ENCODE measurements at regions of chrX and their contacts with region 1.

Region 1: GRCh38 chrX:65528705-65529340 is 5.8 kb downstream of the LAS1L start:
- DNase-seq: no peak
- H3K4me3 ChIP-seq: no peak overlapping the region
- H3K27ac ChIP-seq: no peak overlapping the region
- H3K4me1 ChIP-seq: peaks cover 0 to 11% (median 10%) of the 10 kb centered on the region in 4 donors
- H3K27me3 ChIP-seq: no peaks in the 10 kb centered on the region
- CTCF ChIP-seq: peak; percentile 41 to 84 (median 66)
- EP300 ChIP-seq: no peak
- POLR2A ChIP-seq: no peak

Region 2: DNA sequence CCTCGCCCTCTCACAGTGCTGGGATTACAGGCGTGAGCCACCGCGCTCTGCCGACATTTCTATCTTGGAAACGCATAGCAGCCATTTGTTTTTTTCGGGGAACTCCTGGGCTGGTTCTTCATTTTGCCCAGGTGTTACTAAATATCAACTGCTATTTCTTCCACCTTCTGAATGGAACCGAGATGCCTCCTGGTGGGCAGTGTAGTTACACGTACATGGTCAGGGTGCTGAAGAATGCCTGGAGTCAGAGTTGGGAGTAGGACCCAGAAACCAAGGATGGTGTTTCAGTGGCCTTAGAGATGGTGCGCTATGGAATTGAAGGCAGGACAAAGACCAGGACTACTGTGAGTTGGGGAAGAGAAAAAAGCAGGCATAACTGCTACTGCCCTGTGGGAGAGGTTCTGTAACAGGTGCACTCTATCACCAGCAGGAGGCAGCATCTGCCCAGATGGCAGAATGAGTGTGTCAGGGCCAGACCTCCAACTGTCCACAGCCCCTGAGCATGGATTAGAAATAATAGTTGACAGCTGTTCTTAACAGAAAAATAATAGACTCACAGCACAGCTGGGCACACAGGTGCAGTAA is 634.3 kb before region 1 on chrX:
- intact Hi-C with region 1: loop called (anchors 5 kb)
- DNase-seq: no peak
- H3K4me3 ChIP-seq: no peak overlapping the region
- H3K27ac ChIP-seq: no peak overlapping the region
- H3K4me1 ChIP-seq: no peaks in the 10 kb centered on the region
- H3K27me3 ChIP-seq: no peaks in the 10 kb centered on the region
- CTCF ChIP-seq: peak in 3 of 4 experiments; percentile 41 to 49 (median 44)
- EP300 ChIP-seq: no peak
- POLR2A ChIP-seq: no peak

Region 3: DNA sequence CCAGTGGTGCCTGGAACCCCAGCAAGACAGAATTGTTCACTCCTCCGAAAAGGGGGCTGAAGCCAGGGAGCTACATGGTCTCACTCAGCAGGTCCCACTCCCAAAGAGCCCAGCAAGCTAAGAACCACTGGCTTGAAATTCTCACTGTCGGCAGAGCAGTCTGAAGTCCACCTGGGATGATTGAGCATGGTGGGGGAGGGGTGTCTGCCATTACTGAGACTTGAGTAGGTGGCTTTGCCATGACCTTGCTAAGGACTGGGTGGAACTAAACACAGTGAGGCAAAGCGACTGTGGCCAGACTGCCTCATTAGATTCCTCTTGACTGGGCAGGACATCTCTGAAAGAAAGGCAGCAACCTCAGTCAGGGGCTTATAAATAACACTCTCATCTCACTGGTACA is 430.0 kb before region 1 on chrX:
- intact Hi-C with region 1: no loop called
- DNase-seq: no peak
- H3K4me3 ChIP-seq: no peak overlapping the region
- H3K27ac ChIP-seq: no peak overlapping the region
- H3K4me1 ChIP-seq: no peaks in the 10 kb centered on the region
- H3K27me3 ChIP-seq: no peaks in the 10 kb centered on the region
- CTCF ChIP-seq: no peak
- EP300 ChIP-seq: no peak
- POLR2A ChIP-seq: no peak

Region 4: DNA sequence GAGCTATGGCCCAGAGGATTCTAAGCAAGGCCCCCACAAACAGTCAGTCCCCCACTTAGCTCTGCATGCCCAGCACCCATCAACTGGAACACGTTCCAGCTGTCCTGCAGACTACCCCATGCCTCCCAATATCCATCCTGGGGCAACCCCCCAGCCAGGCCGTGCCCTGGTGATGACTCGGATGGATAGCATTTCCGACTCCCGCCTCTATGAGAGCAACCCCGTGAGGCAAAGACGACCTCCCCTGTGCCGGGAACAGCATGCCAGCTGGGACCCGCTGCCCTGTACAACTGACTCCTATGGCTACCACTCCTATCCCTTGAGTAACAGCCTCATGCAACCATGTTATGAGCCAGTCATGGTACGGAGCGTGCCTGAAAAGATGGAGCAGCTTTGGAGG is 26.2 kb before region 1 on chrX:
- intact Hi-C with region 1: no loop called
- DNase-seq: no peak
- H3K4me3 ChIP-seq: no peak overlapping the region
- H3K27ac ChIP-seq: no peak overlapping the region
- H3K4me1 ChIP-seq: no peaks in the 10 kb centered on the region
- H3K27me3 ChIP-seq: no peaks in the 10 kb centered on the region
- CTCF ChIP-seq: no peak
- EP300 ChIP-seq: no peak
- POLR2A ChIP-seq: no peak